ENCODE measurements at regions of chr13 and their contacts with region 1.

Region 1: GRCh38 chr13:52665325-52665724 is 12.7 kb downstream of the SUGT1 start:
- DNase-seq: no peak

Region 2: GRCh38 chr13:52319876-52320275 is 345.4 kb before region 1 on chr13:
- intact Hi-C with region 1: no loop called
- DNase-seq: no peak

Region 3: GRCh38 chr13:52809310-52809769 is 144.0 kb after region 1 on chr13:
- intact Hi-C with region 1: loop called (anchors 10 kb)
- DNase-seq: peak; percentile 51 to 91 (median 76)

Region 4: DNA sequence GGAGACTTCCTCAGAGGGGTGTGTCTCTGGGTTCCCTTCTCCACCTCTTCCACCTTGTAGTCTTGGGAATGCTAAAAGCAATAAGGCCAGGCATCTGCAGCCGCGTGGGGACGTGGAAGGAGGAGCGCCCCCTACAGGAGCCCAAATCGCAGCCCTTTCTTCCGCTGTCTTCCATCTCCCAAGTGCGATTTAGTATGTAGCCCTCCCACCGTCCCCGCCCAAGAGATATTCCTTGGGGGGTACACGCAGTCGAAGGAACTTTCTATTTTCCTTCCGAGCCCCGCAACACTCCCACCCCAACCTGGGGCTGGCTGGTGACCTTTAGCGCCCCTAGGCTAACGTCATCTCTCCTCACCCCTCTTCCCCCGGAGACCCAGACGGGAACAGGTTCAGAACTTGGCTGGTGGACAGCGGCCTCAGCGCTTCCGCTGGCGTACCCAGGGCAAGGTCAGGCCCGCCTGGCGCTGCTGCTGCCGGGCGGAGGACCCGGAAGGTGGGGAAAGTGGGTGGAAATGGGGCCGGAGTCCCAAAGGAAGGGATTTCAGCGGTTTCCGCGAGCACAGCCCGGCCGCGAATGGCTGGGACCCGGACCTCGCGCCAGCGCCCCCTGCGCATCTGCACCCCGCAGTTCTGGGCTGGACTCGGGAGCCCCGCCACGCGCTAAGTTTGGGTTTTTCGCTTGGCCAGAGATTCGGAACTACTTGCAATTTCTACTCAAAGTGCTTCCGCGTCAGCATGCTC is 185.2 kb after region 1 on chr13:
- intact Hi-C with region 1: no loop called
- DNase-seq: peak in 41 of 42 donors; percentile 41 to 87 (median 72)

Measured in head of caudate nucleus (tissue), 42 donors.